Activated CD4-positive, alpha-beta T cell treated with anti-CD3 and anti-CD28 coated beads, Interleukin-2, amount 10 ng/mL, durations not matched to agents 24 days and 14 days (primary cell): ENCODE measurements at regions of chr3 and their contacts with region 1.

Region 1: DNA sequence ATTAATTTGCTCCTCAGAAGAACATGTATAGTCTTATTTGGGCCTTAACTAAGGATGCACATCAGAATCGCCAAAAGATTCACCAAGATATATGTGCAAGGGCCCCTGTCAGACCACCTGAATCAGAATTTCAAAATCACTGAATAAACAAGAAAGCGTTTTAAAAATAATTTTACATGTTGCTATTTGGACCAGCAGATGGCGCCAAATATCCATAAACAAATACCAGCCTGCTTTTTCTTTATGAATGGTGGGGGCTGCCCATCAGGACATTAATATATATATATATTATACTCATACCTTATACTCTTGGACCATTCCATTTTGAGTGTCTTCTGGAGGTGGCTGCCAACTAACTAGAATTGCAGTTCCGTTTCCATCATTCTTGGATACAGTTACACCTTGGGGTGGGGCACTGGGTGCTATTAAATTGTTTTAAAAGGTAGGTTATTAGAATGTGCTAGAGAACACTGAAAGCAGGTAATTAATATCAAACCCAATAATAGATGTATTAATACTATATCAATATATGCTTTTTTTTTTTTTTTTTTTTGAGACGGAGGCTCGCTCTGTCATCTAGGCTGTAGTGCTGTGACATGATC is 1108.3 kb downstream of the ROBO1 start:
- DNase-seq: peak; percentile 70
- H3K4me3 Mint-ChIP-seq: no peak overlapping the region
- H3K27ac Mint-ChIP-seq: no peak overlapping the region
- H3K4me1 Mint-ChIP-seq: no peaks in the 10 kb centered on the region
- H3K27me3 Mint-ChIP-seq: no peaks in the 10 kb centered on the region

Region 2: GRCh38 chr3:79032686-79033318 is 373.3 kb after region 1 on chr3:
- intact Hi-C with region 1: loop called (anchors 2 kb)
- DNase-seq: no peak
- H3K4me3 Mint-ChIP-seq: no peak overlapping the region
- H3K27ac Mint-ChIP-seq: no peak overlapping the region
- H3K4me1 Mint-ChIP-seq: no peaks in the 10 kb centered on the region
- H3K27me3 Mint-ChIP-seq: no peaks in the 10 kb centered on the region

Region 3: DNA sequence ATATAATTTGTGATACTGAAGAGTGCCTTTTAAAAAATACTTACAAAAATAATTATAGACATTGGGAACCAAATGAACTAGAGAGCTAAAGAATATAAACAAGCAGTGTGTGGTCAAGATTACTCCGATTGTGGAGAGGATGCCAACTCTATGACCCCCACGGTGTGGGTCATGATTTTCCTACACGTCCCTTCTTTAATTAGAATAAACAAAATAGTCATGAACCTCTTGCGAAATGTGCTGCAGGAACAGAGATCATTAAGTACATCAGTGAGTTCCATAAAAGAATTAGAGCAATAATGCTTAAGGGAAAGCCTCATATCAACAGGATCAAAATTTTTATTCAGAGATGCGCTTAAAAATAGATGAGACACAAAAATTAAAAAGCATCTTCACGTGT is 1584.9 kb after region 1 on chr3:
- intact Hi-C with region 1: no loop called
- DNase-seq: no peak
- H3K4me3 Mint-ChIP-seq: no peak overlapping the region
- H3K27ac Mint-ChIP-seq: no peak overlapping the region
- H3K4me1 Mint-ChIP-seq: no peaks in the 10 kb centered on the region
- H3K27me3 Mint-ChIP-seq: no peaks in the 10 kb centered on the region